ENCODE measurements at regions of chr2 and their contacts with region 1.

Region 1: DNA sequence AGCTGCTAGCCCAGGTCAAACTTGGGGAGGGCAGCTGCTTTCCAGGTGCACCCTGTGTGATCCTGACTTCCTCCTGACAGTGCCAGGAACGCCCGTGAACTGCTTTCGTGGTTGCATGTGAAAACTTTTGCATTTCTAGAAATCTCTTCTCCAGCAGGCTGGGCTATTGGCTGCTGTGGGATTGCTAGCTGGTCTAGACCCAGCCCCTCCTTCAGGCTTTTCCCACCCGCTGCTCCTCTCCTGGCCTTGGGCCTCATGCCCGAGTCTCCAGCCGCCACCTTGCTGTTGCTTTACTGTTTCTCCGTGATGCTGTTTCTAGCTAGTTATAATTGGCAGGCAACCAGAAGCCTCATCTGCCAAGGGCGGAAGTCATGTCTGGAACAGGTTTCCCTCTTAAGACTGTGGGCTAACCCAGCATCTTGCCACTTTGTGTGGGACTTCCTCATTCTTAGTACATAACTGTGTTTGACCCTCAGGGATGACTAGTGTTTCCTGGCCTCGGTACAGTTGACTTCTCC is 27.0 kb upstream of the MGAT4A start:
- DNase-seq: peak; percentile 68 to 87 (median 71)
- H3K4me3 ChIP-seq: peak overlapping the region in 1 of 2 donors; percentile 37
- H3K4me3 Mint-ChIP-seq: peak overlapping the region; percentile 68 to 95 (median 84)
- H3K27ac ChIP-seq: peak overlapping the region; percentile 68
- H3K27ac Mint-ChIP-seq: peak overlapping the region; percentile 93 to 99 (median 97)
- H3K4me1 ChIP-seq: peaks cover 69% of the 10 kb centered on the region
- H3K4me1 Mint-ChIP-seq: peaks cover 57 to 86% (median 71%) of the 10 kb centered on the region in 4 donors
- H3K27me3 ChIP-seq: no peaks in the 10 kb centered on the region
- H3K27me3 Mint-ChIP-seq: no peaks in the 10 kb centered on the region

Region 2: GRCh38 chr2:98736464-98736889 is 21.5 kb before region 1 on chr2:
- CTCF ChIA-PET with region 1: interaction called, 24 read pairs
- POLR2A ChIA-PET with region 1: interaction called, 565 read pairs
- intact Hi-C with region 1: loop called (anchors 1 kb)
- DNase-seq: peak in 3 of 5 donors; percentile 41 to 65 (median 53)
- H3K4me3 ChIP-seq: no peak overlapping the region
- H3K4me3 Mint-ChIP-seq: peak overlapping the region; percentile 11 to 81 (median 62)
- H3K27ac ChIP-seq: peak overlapping the region; percentile 7
- H3K27ac Mint-ChIP-seq: peak overlapping the region; percentile 74 to 90 (median 85)
- H3K4me1 ChIP-seq: peaks cover 72% of the 10 kb centered on the region
- H3K4me1 Mint-ChIP-seq: peaks cover 57 to 92% (median 69%) of the 10 kb centered on the region in 4 donors
- H3K27me3 ChIP-seq: no peaks in the 10 kb centered on the region
- H3K27me3 Mint-ChIP-seq: no peaks in the 10 kb centered on the region

Region 3: GRCh38 chr2:98743835-98744234 is 14.1 kb before region 1 on chr2:
- CTCF ChIA-PET with region 1: interaction called, 9 read pairs
- POLR2A ChIA-PET with region 1: interaction called, 565 read pairs
- intact Hi-C with region 1: no loop called
- DNase-seq: no peak
- H3K4me3 ChIP-seq: no peak overlapping the region
- H3K4me3 Mint-ChIP-seq: peak overlapping the region in 6 of 8 donors; percentile 8 to 59 (median 40)
- H3K27ac ChIP-seq: no peak overlapping the region
- H3K27ac Mint-ChIP-seq: peak overlapping the region in 5 of 7 donors; percentile 23 to 86 (median 70)
- H3K4me1 ChIP-seq: peaks cover 45% of the 10 kb centered on the region
- H3K4me1 Mint-ChIP-seq: peaks cover 32 to 85% (median 46%) of the 10 kb centered on the region in 4 donors
- H3K27me3 ChIP-seq: no peaks in the 10 kb centered on the region
- H3K27me3 Mint-ChIP-seq: no peaks in the 10 kb centered on the region

Region 4: GRCh38 chr2:98854682-98855081 is 96.7 kb after region 1 on chr2:
- CTCF ChIA-PET with region 1: no interaction called
- POLR2A ChIA-PET with region 1: no interaction called
- intact Hi-C with region 1: no loop called
- DNase-seq: no peak
- H3K4me3 ChIP-seq: no peak overlapping the region
- H3K4me3 Mint-ChIP-seq: no peak overlapping the region
- H3K27ac ChIP-seq: no peak overlapping the region
- H3K27ac Mint-ChIP-seq: no peak overlapping the region
- H3K4me1 ChIP-seq: no peaks in the 10 kb centered on the region
- H3K4me1 Mint-ChIP-seq: peaks cover 0 to 2% (median under 1%) of the 10 kb centered on the region in 4 donors
- H3K27me3 ChIP-seq: peaks cover 19% of the 10 kb centered on the region
- H3K27me3 Mint-ChIP-seq: peaks cover 24 to 29% of the 10 kb centered on the region in 2 donors

Region 5: GRCh38 chr2:99984799-99985515 is 1227.0 kb after region 1 on chr2:
- CTCF ChIA-PET with region 1: no interaction called
- POLR2A ChIA-PET with region 1: no interaction called
- intact Hi-C with region 1: no loop called
- DNase-seq: no peak
- H3K4me3 ChIP-seq: no peak overlapping the region
- H3K4me3 Mint-ChIP-seq: peak overlapping the region in 1 of 8 donors; percentile 33
- H3K27ac ChIP-seq: no peak overlapping the region
- H3K27ac Mint-ChIP-seq: no peak overlapping the region
- H3K4me1 ChIP-seq: no peaks in the 10 kb centered on the region
- H3K4me1 Mint-ChIP-seq: no peaks in the 10 kb centered on the region
- H3K27me3 ChIP-seq: no peaks in the 10 kb centered on the region
- H3K27me3 Mint-ChIP-seq: peaks cover 0 to 2% of the 10 kb centered on the region in 2 donors

Measured in CD4-positive, alpha-beta memory T cell (primary cell).